Activated CD8-positive, alpha-beta T cell treated with anti-CD3 and anti-CD28 coated beads, Interleukin-2, amount 10 ng/mL, durations not matched to agents 7 days and 5 days (primary cell): ENCODE measurements at regions of chr3 and their contacts with region 1.

Region 1: DNA sequence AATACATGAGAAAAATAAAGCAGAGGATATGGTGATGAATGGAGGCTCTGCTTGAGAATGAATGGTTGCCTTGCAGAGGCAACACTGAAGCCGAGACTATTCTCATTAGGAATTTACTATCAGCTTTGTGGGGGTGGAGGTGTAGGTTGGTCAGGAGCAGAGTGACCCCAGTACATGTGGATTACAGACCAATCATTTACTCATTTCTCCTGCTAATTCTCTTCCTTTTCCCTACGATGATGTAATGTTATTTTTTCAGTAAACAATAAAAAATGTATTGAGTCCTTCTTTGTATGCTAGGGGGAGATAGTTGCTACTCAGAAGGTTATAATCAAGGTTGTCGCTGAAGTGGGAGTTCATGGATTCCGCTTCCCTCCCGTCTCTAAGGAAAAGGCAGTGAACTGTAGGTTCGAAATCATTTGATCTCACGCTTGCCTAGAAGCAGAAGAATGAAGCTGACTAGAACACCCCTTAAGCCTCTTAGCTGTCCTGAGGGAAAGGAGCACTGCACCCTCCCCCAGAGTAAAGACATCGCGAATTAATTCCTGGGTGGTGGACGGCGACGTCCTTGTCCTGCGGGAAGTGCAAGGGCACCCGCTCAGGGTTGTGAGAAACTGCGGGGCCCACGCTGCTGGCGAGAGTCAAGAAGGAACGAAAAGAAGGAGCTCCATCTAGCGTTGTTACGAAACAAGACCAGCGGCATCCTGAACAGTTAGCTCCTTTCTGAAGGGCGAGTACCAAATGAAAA is 213.2 kb upstream of the PFN2 start:
- DNase-seq: peak; percentile 59
- ATAC-seq: peak; percentile 96
- H3K4me3 Mint-ChIP-seq: no peak overlapping the region
- H3K27ac Mint-ChIP-seq: no peak overlapping the region
- H3K4me1 Mint-ChIP-seq: no peaks in the 10 kb centered on the region
- H3K27me3 Mint-ChIP-seq: peaks cover 18% of the 10 kb centered on the region

Region 2: DNA sequence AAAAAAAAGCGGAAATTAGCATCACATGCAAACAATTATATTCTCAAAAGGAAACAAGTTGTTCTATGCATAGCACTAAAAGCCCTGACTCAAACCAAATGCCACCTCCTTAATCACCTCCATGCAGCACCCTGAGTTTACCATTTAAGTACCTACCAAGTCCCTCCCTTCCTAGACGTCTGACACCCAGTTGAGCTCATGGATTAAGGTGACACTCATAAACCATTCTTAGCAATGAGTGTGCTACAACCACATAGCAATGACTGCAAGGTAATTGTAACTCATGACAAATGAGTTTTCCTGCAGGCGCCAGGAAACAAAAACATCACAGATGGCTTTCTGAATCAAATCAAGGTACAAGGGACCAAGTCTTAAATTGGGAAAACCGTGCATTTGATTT is 558.1 kb before region 1 on chr3:
- CTCF ChIA-PET with region 1: no interaction called
- POLR2A ChIA-PET with region 1: no interaction called
- DNase-seq: no peak
- ATAC-seq: no peak
- H3K4me3 Mint-ChIP-seq: no peak overlapping the region
- H3K27ac Mint-ChIP-seq: no peak overlapping the region
- H3K4me1 Mint-ChIP-seq: peaks cover 10% of the 10 kb centered on the region
- H3K27me3 Mint-ChIP-seq: peaks cover 9% of the 10 kb centered on the region

Region 3: DNA sequence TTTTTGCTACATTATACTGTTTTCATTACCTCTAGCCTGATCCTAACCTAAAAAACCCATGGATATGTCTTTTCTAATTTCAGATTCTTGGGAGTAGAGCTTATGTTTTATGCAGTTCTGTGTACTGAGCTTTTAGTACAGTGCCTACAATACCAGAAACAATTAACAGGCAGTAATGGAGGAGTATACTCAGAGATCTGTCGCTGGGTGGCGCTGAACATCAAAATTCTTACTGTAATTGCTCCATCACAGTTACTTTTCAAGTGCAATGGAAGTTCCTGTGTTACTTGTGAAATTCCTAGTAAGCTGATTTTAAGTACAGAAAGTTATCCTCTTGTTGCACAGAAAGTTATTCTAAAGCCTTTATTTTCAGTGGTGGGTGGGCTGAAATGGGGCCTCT is 304.0 kb before region 1 on chr3:
- CTCF ChIA-PET with region 1: interaction called, 10 read pairs
- POLR2A ChIA-PET with region 1: no interaction called
- DNase-seq: peak; percentile 30
- ATAC-seq: no peak
- H3K4me3 Mint-ChIP-seq: no peak overlapping the region
- H3K27ac Mint-ChIP-seq: no peak overlapping the region
- H3K4me1 Mint-ChIP-seq: peaks cover 3% of the 10 kb centered on the region
- H3K27me3 Mint-ChIP-seq: no peaks in the 10 kb centered on the region

Region 4: DNA sequence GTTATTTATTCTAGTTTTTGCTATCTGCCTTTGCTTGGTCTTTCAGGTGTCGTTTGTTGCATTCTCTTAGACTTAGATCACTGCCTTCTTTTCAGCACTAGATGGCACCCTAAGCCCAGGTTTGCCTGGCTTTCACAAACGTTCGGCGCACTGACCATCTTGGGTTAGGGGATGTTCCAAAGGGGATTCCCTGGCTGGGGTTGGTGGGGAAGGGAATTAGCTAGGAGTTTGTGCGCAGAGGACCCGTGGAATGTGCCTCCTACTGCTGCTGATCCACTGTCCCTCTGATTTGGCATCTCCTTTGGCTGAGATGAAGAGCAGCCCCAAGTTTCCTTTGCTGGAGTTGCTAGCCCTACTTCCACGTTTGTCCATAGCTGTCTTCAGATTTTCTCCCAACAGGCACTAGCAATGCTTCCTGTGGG is 247.0 kb before region 1 on chr3:
- CTCF ChIA-PET with region 1: interaction called, 14 read pairs
- POLR2A ChIA-PET with region 1: no interaction called
- DNase-seq: peak; percentile 35
- ATAC-seq: no peak
- H3K4me3 Mint-ChIP-seq: no peak overlapping the region
- H3K27ac Mint-ChIP-seq: no peak overlapping the region
- H3K4me1 Mint-ChIP-seq: peaks cover 3% of the 10 kb centered on the region
- H3K27me3 Mint-ChIP-seq: no peaks in the 10 kb centered on the region

Region 5: GRCh38 chr3:149969940-149970715 is 213.7 kb before region 1 on chr3:
- CTCF ChIA-PET with region 1: interaction called, 72 read pairs
- POLR2A ChIA-PET with region 1: interaction called, 3 read pairs
- DNase-seq: peak; percentile 68
- ATAC-seq: peak; percentile 66
- H3K4me3 Mint-ChIP-seq: peak overlapping the region; percentile 77
- H3K27ac Mint-ChIP-seq: no peak overlapping the region
- H3K4me1 Mint-ChIP-seq: peaks cover 15% of the 10 kb centered on the region
- H3K27me3 Mint-ChIP-seq: peaks cover 36% of the 10 kb centered on the region

Region 6: GRCh38 chr3:150062492-150062891 is 121.4 kb before region 1 on chr3:
- CTCF ChIA-PET with region 1: no interaction called
- POLR2A ChIA-PET with region 1: no interaction called
- DNase-seq: no peak
- ATAC-seq: no peak
- H3K4me3 Mint-ChIP-seq: no peak overlapping the region
- H3K27ac Mint-ChIP-seq: no peak overlapping the region
- H3K4me1 Mint-ChIP-seq: no peaks in the 10 kb centered on the region
- H3K27me3 Mint-ChIP-seq: peaks cover 5% of the 10 kb centered on the region

Region 7: GRCh38 chr3:150286390-150287147 is 102.7 kb after region 1 on chr3:
- CTCF ChIA-PET with region 1: no interaction called
- POLR2A ChIA-PET with region 1: no interaction called
- DNase-seq: no peak
- ATAC-seq: peak; percentile 65
- H3K4me3 Mint-ChIP-seq: no peak overlapping the region
- H3K27ac Mint-ChIP-seq: no peak overlapping the region
- H3K4me1 Mint-ChIP-seq: no peaks in the 10 kb centered on the region
- H3K27me3 Mint-ChIP-seq: peaks cover 41% of the 10 kb centered on the region